Left ventricle myocardium superior (tissue), 1 donor: ENCODE measurements at regions of chr2 and their contacts with region 1.

Region 1: GRCh38 chr2:46876741-46877384 is 38.7 kb downstream of the MCFD2 start:
- DNase-seq: peak; percentile 61
- ATAC-seq: peak; percentile 50

Region 2: GRCh38 chr2:46699934-46700256 is 177.0 kb before region 1 on chr2:
- intact Hi-C with region 1: loop called (anchors 10 kb)
- DNase-seq: no peak
- ATAC-seq: no peak

Region 3: DNA sequence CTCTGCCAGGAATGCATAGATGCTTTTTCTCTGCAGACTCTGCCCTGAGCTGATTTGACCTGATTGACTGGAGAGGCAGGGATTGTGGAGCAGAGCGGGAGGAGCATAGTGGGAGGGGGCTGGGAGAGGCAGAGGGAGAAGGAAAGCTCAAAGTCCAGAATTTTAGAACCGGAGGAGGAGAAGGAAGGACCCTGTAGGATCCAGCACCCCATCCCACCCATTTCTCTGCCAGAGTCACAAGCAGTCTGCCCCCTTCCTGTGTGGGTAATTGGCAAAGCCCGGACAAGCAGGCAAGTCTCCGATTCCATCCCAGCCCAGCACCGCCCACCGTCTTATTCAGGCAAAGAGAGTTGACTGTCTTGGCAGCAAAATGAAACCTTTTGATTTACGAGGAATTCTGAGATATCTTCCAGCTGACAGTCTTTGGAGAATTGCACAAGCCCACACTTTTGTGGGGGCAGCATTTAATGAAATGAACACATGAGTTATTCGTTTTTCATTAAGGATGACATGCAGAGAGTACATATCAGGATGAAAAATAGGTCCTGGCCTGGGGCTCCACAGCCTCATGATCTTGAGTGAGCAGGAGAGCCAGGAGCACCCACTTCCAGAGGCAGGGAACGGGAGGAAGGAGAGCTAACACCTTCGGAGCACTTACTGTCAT is 64.4 kb before region 1 on chr2:
- intact Hi-C with region 1: loop called (anchors 10 kb)
- DNase-seq: peak; percentile 70
- ATAC-seq: peak; percentile 42